B cell (primary cell): ENCODE measurements at regions of chr12 and their contacts with region 1.

Region 1: DNA sequence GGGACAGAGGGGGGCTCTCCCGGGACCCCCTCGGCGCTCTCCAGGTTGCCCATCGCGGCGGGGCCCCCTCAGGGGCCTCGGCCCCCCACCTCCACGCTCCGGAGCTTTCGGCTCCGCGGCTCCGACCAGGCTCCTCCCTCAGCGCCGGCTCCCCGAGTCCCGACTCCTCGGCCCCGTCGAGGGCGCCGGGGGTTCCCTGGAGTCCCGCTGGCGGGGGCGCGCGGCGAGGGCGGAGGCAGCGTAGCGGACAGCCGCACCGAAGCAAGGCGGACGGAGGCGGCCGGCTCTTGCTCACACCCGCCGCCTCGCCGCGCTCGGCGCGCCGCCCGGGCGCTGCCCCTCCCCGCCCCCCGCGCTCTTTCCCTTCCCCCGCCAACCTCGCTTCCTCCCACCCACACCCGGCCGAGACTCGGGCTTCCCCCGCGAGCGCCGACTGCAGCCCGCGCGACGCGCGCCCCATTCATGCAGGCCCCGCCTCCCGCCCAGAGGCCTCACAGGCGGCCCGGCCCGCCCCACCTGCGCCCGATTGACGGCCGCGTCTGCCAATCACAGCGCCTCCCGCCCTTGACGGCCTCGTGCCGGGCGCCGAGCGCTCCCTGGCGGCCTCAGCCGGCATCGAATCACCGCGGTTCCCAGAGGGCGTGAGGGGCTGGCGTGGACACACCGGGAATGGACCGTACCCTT is at the start of gene FMNL3:
- DNase-seq: peak; percentile 99
- ATAC-seq: peak; percentile 92
- H3K4me3 ChIP-seq: peak within 1 kb of the TSS; percentile 47 to 89 (median 84)
- H3K4me3 Mint-ChIP-seq: peak within 1 kb of the TSS; percentile 97
- H3K27ac ChIP-seq: peak within 1 kb of the TSS; percentile 86 to 88
- H3K27ac Mint-ChIP-seq: peak within 1 kb of the TSS; percentile 94
- H3K4me1 ChIP-seq: peaks cover 34 to 49% of the 10 kb centered on the region in 2 donors
- H3K4me1 Mint-ChIP-seq: peaks cover 47% of the 10 kb centered on the region
- H3K27me3 ChIP-seq: peaks cover 0 to 4% (median 2%) of the 10 kb centered on the region in 4 experiments
- H3K27me3 Mint-ChIP-seq: peaks cover 4% of the 10 kb centered on the region
- CTCF ChIP-seq: peak; percentile 93
- total RNA-seq, gene FMNL3: 69.9 and 73.7 TPM in 2 replicates

Region 2: DNA sequence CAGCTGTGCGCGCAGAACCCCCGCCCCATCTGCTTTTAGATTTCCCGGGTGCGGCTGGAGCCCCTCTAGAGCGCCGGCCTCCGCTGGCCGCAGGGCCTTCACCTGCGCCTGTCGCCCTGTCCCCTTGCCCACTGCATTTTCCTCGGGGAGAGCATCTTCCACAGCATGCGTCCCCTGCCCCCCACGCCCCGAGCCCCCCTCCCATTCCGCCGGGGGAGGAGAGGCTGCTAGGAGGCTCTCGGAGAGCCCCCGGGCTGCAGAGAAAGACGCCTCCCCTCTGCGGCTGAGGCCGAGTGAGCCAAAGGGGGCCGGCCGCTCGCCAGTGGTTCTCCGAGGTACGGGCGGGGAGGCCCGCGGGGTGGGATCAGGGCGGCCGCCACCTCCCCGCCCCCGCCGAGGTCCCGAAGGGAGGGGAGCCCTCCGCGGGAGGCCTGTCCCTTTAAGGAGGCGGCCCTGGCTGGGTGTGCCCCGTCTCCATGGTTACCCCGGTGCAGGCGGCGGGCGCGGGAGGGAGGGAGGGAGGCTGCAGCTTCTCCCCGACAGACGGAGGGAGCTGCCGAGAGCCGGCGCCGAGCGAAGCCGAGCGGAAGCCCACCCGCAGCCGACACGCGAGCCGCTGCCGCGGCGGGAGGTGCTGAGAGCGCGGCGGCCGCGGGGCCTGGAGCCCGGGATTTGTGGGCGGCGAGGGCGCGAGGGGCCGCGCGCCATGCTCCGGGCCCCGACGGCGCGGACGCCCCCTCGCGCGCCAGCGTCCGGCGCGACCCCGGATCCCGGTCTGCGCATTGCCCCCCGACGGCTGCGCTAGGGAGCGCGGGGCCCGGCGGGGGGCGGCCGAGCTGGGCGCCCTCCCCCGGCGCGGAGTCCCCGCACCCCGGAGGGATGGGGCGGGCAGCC is 168.5 kb before region 1 on chr12 and contains the start of gene KCNH3:
- CTCF ChIA-PET with region 1: no interaction called
- POLR2A ChIA-PET with region 1: no interaction called
- intact Hi-C with region 1: loop called (anchors 2 kb)
- DNase-seq: peak; percentile 90
- ATAC-seq: peak; percentile 82
- H3K4me3 ChIP-seq: peak within 1 kb of the TSS; percentile 40 to 76 (median 48)
- H3K4me3 Mint-ChIP-seq: peak within 1 kb of the TSS; percentile 82
- H3K27ac ChIP-seq: no peak within 1 kb of the TSS
- H3K27ac Mint-ChIP-seq: no peak within 1 kb of the TSS
- H3K4me1 ChIP-seq: peaks cover 33 to 49% of the 10 kb centered on the region in 2 donors
- H3K4me1 Mint-ChIP-seq: peaks cover 44% of the 10 kb centered on the region
- H3K27me3 ChIP-seq: peaks cover 0 to 42% (median 13%) of the 10 kb centered on the region in 4 experiments
- H3K27me3 Mint-ChIP-seq: peaks cover 31% of the 10 kb centered on the region
- CTCF ChIP-seq: no peak
- total RNA-seq, gene KCNH3: 0.19 and 0.54 TPM in 2 replicates

Region 3: DNA sequence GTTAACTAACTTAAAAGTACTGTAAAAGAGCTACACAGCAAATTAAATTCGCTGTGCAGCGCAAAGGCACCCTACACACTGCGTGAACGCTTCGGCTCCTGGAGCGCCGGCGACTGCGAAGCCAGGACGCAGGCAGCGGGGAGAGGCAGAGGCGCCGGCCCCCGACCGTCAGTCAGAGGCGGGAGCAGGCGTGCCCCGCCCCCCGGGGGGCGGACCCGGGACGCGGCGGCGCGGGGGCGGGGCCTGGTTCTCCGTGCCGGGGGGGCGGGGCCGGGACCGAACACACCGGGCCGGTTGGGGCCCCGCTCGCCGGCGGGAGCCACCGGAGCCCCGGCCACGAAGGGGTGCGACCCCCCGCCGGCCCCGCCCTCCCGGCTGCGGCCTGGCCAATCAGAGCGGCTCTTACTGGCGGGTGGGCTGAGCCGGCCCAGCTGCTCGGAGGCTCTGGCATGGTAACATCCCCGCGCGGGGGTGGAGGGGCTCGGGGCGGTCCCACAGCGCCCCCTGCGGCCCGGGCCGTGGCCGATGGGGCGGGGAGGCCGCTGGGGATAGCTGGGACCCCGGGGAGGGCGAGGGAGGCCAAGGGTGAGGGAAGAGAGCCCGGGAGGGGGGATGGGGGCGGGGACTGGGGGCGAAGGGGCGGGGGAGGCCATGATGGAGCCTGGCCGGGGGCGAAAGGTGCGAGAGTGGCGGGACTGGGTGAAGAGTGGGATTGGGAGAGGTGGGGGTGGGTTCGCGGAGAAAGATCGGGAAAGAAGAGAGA is 83.9 kb before region 1 on chr12 and contains the start of gene PRPF40B:
- CTCF ChIA-PET with region 1: interaction called, 8 read pairs
- POLR2A ChIA-PET with region 1: interaction called, 6 read pairs
- intact Hi-C with region 1: loop called (anchors 1 kb)
- DNase-seq: peak; percentile 92
- ATAC-seq: peak; percentile 85
- H3K4me3 ChIP-seq: peak within 1 kb of the TSS; percentile 56 to 85 (median 73)
- H3K4me3 Mint-ChIP-seq: peak within 1 kb of the TSS; percentile 94
- H3K27ac ChIP-seq: peak within 1 kb of the TSS; percentile 56 to 65
- H3K27ac Mint-ChIP-seq: peak within 1 kb of the TSS; percentile 91
- H3K4me1 ChIP-seq: peaks cover 11 to 21% of the 10 kb centered on the region in 2 donors
- H3K4me1 Mint-ChIP-seq: peaks cover 19% of the 10 kb centered on the region
- H3K27me3 ChIP-seq: no peaks in the 10 kb centered on the region
- H3K27me3 Mint-ChIP-seq: no peaks in the 10 kb centered on the region
- CTCF ChIP-seq: peak; percentile 51
- total RNA-seq, gene PRPF40B: 23.6 and 23.7 TPM in 2 replicates

Region 4: GRCh38 chr12:49655595-49656236 is 51.6 kb before region 1 on chr12:
- CTCF ChIA-PET with region 1: interaction called, 372 read pairs
- POLR2A ChIA-PET with region 1: interaction called, 10 read pairs
- intact Hi-C with region 1: no loop called
- DNase-seq: no peak
- ATAC-seq: no peak
- H3K4me3 ChIP-seq: no peak overlapping the region
- H3K4me3 Mint-ChIP-seq: no peak overlapping the region
- H3K27ac ChIP-seq: no peak overlapping the region
- H3K27ac Mint-ChIP-seq: no peak overlapping the region
- H3K4me1 ChIP-seq: peaks cover 3 to 14% of the 10 kb centered on the region in 2 donors
- H3K4me1 Mint-ChIP-seq: peaks cover 24% of the 10 kb centered on the region
- H3K27me3 ChIP-seq: no peaks in the 10 kb centered on the region
- H3K27me3 Mint-ChIP-seq: no peaks in the 10 kb centered on the region
- CTCF ChIP-seq: no peak

Region 5: GRCh38 chr12:49673446-49674317 is 33.6 kb before region 1 on chr12:
- CTCF ChIA-PET with region 1: interaction called, 37 read pairs
- POLR2A ChIA-PET with region 1: interaction called, 7 read pairs
- intact Hi-C with region 1: loop called (anchors 2 kb)
- DNase-seq: no peak
- ATAC-seq: no peak
- H3K4me3 ChIP-seq: no peak overlapping the region
- H3K4me3 Mint-ChIP-seq: peak overlapping the region; percentile 34
- H3K27ac ChIP-seq: peak overlapping the region; percentile 92 to 95
- H3K27ac Mint-ChIP-seq: peak overlapping the region; percentile 87
- H3K4me1 ChIP-seq: peaks cover 64 to 67% of the 10 kb centered on the region in 2 donors
- H3K4me1 Mint-ChIP-seq: peaks cover 84% of the 10 kb centered on the region
- H3K27me3 ChIP-seq: no peaks in the 10 kb centered on the region
- H3K27me3 Mint-ChIP-seq: no peaks in the 10 kb centered on the region
- CTCF ChIP-seq: no peak

Region 6: GRCh38 chr12:50354908-50355307 is 647.6 kb after region 1 on chr12:
- CTCF ChIA-PET with region 1: no interaction called
- POLR2A ChIA-PET with region 1: no interaction called
- intact Hi-C with region 1: no loop called
- DNase-seq: no peak
- ATAC-seq: no peak
- H3K4me3 ChIP-seq: no peak overlapping the region
- H3K4me3 Mint-ChIP-seq: no peak overlapping the region
- H3K27ac ChIP-seq: no peak overlapping the region
- H3K27ac Mint-ChIP-seq: no peak overlapping the region
- H3K4me1 ChIP-seq: no peaks in the 10 kb centered on the region
- H3K4me1 Mint-ChIP-seq: no peaks in the 10 kb centered on the region
- H3K27me3 ChIP-seq: no peaks in the 10 kb centered on the region
- H3K27me3 Mint-ChIP-seq: no peaks in the 10 kb centered on the region
- CTCF ChIP-seq: no peak